Cardiac septum (tissue), 1 donor: ENCODE measurements at regions of chr7 and their contacts with region 1.

Region 1: GRCh38 chr7:148698397-148699023 is at the start of gene CUL1:
- DNase-seq: peak; percentile 93
- total RNA-seq, gene CUL1: 42.3 TPM

Region 2: GRCh38 chr7:148884299-148885022 is 186.0 kb after region 1 on chr7:
- intact Hi-C with region 1: loop called (anchors 2 kb)
- DNase-seq: peak; percentile 95

Region 3: GRCh38 chr7:149028346-149029109 is 330.0 kb after region 1 on chr7 and contains the start of gene PDIA4:
- intact Hi-C with region 1: loop called (anchors 5 kb)
- DNase-seq: peak; percentile 100
- total RNA-seq, gene PDIA4: 38.5 TPM